Ovary (tissue), 10 donors: ENCODE measurements at regions of chr5 and their contacts with region 1.

Region 1: DNA sequence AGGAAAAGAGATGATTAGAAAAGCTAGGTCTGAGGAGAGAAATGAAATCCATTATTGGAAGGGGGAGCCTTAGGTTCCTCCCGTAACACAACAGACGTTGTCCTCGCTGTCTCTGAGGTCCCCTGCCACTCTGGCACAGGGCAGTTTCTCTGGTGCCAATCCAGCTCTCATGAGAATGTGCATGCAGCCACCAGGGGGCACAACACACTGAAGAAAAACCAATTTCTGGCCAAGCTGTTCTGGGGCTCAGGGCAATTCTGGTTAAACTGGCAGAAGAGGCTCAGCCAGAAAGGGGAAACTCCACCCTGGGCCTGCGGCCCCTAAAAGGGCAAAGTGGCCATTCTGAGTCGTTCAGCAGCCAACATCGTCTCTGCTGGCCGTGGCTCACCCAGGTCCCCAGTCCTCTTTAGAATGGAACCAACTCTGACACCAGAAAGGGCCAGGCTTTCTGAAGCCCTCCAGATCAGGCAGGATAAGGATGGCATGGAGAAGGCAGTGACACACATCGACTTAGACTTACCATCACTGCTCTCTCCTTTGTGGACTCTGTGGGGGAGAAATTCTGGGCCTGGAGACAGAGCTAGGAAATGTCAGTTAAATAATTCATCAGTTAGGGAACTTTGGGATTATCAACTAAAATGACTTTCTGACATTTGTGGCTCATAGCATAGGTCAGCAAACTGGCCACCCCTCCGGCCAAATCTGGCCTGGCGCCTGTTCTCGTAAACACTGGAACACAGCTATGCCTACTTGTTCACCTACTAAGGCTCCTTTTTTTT is 58.5 kb upstream of the GOLPH3 start:
- DNase-seq: peak; percentile 72 to 85 (median 82)
- H3K4me3 ChIP-seq: no peak overlapping the region
- H3K27ac ChIP-seq: peak overlapping the region; percentile 44 to 49
- H3K4me1 ChIP-seq: peaks cover 12% of the 10 kb centered on the region
- H3K27me3 ChIP-seq: no peaks in the 10 kb centered on the region
- CTCF ChIP-seq: peak; percentile 64 to 84 (median 76)
- EP300 ChIP-seq: no peak
- POLR2A ChIP-seq: no peak

Region 2: DNA sequence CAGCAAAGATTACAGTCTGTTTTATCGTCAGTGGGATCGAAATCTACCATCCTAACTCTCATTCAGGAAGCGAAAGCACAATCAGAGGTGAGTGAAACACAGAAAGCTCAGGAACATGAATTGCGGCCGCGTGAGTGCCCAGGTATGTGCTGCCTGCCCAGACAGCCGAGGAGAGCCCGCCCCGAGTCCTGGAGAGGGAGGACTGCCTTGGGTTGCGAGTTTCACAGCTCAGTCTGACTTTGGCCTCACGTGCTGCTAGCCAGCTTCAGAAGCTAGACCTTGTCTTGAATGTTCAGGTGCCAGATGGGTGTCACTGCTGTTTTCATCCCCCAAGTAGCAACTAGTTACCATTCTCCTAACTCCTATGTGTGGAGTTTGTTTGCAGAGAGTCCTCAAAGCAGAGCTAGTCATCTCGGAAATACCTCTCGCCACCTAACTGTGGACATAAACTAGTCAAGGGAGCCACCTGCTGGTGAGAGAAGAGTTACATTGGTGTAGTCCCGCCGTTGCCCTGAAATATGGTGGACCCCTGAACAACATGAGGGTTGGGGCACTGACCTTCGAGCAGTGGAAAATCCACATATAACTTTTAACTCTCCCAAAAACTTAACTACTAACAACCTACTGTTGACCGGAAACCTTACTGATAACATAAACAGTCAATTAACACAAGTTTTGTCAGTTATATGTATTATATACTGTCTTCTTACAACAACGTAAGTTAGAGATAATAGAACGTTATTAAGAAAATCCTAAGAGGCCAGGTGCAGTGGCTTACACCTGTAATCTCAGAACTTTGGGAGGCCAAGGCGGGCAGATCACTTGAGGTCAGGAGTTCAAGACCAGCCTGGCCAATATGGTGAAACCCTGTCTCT is 139.5 kb before region 1 on chr5:
- intact Hi-C with region 1: no loop called
- DNase-seq: peak; percentile 59 to 83 (median 73)
- H3K4me3 ChIP-seq: no peak overlapping the region
- H3K27ac ChIP-seq: no peak overlapping the region
- H3K4me1 ChIP-seq: peaks cover 22% of the 10 kb centered on the region
- H3K27me3 ChIP-seq: no peaks in the 10 kb centered on the region
- CTCF ChIP-seq: peak; percentile 32 to 90 (median 87)
- EP300 ChIP-seq: no peak
- POLR2A ChIP-seq: no peak

Region 3: GRCh38 chr5:32329308-32329834 is 96.7 kb after region 1 on chr5:
- intact Hi-C with region 1: loop called in 2 of 4 experiments (anchors 5 to 10 kb)
- DNase-seq: peak in 1 of 5 donors; percentile 52
- H3K4me3 ChIP-seq: no peak overlapping the region
- H3K27ac ChIP-seq: no peak overlapping the region
- H3K4me1 ChIP-seq: peaks cover 4% of the 10 kb centered on the region
- H3K27me3 ChIP-seq: no peaks in the 10 kb centered on the region
- CTCF ChIP-seq: peak in 1 of 3 donors; percentile 40
- EP300 ChIP-seq: no peak
- POLR2A ChIP-seq: no peak

Region 4: DNA sequence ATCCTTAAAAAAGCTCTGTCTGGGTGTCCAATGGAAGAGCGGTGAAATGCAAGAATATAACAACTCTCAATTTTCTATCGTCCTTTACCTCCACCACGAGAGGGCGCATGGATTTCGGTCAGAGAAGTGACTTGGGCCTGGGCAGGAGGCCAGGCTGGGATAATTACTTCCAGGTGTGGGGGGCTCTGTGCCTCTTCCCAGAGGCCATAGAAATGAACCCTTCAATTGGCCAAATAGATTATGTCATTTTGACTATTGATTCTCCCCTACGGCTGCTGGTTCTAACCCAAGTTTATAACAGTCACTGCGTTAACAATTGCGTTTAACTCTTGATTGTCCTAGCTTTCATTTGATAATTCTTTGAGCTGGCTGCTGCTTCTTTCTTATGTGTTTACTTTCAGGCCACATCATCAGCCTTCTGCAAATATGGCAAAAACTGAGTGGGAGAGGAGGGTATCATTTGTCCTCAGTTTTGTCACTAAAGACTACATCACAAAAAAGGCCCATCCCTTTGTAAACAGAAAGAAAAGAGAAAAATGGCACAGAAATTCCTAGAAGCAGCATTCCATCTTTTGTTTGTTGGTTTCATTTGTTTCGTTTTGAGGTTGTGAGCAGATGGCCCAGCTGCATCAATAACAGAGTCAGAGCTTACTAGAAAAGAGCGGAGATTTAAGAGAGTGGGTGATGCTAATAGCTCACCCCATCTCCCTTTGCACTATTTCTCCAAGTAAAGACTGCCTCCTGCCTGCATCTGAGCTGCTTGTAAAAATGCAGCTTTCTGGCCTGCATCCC is 257.4 kb after region 1 on chr5:
- intact Hi-C with region 1: loop called in 1 of 4 experiments (anchors 10 kb)
- DNase-seq: peak; percentile 82 to 91 (median 88)
- H3K4me3 ChIP-seq: no peak overlapping the region
- H3K27ac ChIP-seq: no peak overlapping the region
- H3K4me1 ChIP-seq: no peaks in the 10 kb centered on the region
- H3K27me3 ChIP-seq: no peaks in the 10 kb centered on the region
- CTCF ChIP-seq: peak; percentile 65 to 70 (median 68)
- EP300 ChIP-seq: no peak
- POLR2A ChIP-seq: no peak

Region 5: GRCh38 chr5:32585446-32586275 is 353.0 kb after region 1 on chr5 and contains the start of gene SUB1:
- intact Hi-C with region 1: loop called in 1 of 4 experiments (anchors 2 kb)
- DNase-seq: peak; percentile 92 to 96 (median 94)
- H3K4me3 ChIP-seq: peak within 1 kb of the TSS; percentile 74
- H3K27ac ChIP-seq: peak within 1 kb of the TSS; percentile 95 to 96
- H3K4me1 ChIP-seq: peaks cover 3% of the 10 kb centered on the region
- H3K27me3 ChIP-seq: no peaks in the 10 kb centered on the region
- CTCF ChIP-seq: no peak
- EP300 ChIP-seq: no peak
- POLR2A ChIP-seq: peak; percentile 73
- total RNA-seq, gene SUB1: 112 to 180 (median 124) TPM

Region 6: GRCh38 chr5:32613050-32613672 is 380.5 kb after region 1 on chr5:
- intact Hi-C with region 1: loop called in 1 of 4 experiments (anchors 10 kb)
- DNase-seq: peak; percentile 71 to 86 (median 84)
- H3K4me3 ChIP-seq: no peak overlapping the region
- H3K27ac ChIP-seq: no peak overlapping the region
- H3K4me1 ChIP-seq: peaks cover 3% of the 10 kb centered on the region
- H3K27me3 ChIP-seq: no peaks in the 10 kb centered on the region
- CTCF ChIP-seq: peak; percentile 77 to 85 (median 84)
- EP300 ChIP-seq: no peak
- POLR2A ChIP-seq: no peak